Activated CD8-positive, alpha-beta T cell treated with anti-CD3 and anti-CD28 coated beads for 36 hours (primary cell): ENCODE measurements at regions of chr1 and their contacts with region 1.

Region 1: GRCh38 chr1:27556781-27557595 is 47.0 kb downstream of the AHDC1 start:
- DNase-seq: peak; percentile 88
- ATAC-seq: peak; percentile 93
- H3K4me3 Mint-ChIP-seq: no peak overlapping the region
- H3K27ac Mint-ChIP-seq: peak overlapping the region; percentile 72
- H3K4me1 Mint-ChIP-seq: peaks cover 21% of the 10 kb centered on the region
- H3K27me3 Mint-ChIP-seq: no peaks in the 10 kb centered on the region
- CTCF ChIP-seq: peak; percentile 99

Region 2: GRCh38 chr1:27416387-27417111 is 140.4 kb before region 1 on chr1:
- CTCF ChIA-PET with region 1: interaction called, 15 read pairs
- POLR2A ChIA-PET with region 1: no interaction called
- intact Hi-C with region 1: no loop called
- DNase-seq: peak; percentile 71
- ATAC-seq: peak; percentile 49
- H3K4me3 Mint-ChIP-seq: no peak overlapping the region
- H3K27ac Mint-ChIP-seq: peak overlapping the region; percentile 7
- H3K4me1 Mint-ChIP-seq: peaks cover 34% of the 10 kb centered on the region
- H3K27me3 Mint-ChIP-seq: no peaks in the 10 kb centered on the region
- CTCF ChIP-seq: peak; percentile 64

Region 3: DNA sequence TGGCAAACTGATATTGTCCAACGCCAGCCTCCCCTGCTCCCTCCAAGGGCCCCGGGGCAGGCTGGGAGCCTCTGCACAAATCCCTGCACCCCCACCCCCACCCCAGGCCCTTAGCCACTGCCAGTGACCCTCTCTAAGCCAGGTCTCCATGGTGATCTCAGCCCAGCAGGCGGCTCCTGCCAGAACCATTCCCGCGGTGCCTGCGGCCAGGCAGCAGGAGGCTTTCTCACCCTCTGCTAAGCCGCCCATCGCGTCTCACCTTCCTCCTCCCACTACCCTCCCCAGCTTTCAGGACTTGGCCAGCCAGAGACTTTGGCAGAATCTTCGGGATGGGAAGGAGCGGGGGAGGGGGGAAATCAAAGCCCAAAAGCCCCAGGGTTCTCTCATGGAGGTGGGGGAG is 20.2 kb before region 1 on chr1:
- CTCF ChIA-PET with region 1: interaction called, 33 read pairs
- POLR2A ChIA-PET with region 1: no interaction called
- intact Hi-C with region 1: no loop called
- DNase-seq: no peak
- ATAC-seq: no peak
- H3K4me3 Mint-ChIP-seq: no peak overlapping the region
- H3K27ac Mint-ChIP-seq: no peak overlapping the region
- H3K4me1 Mint-ChIP-seq: peaks cover 12% of the 10 kb centered on the region
- H3K27me3 Mint-ChIP-seq: no peaks in the 10 kb centered on the region
- CTCF ChIP-seq: no peak

Region 4: DNA sequence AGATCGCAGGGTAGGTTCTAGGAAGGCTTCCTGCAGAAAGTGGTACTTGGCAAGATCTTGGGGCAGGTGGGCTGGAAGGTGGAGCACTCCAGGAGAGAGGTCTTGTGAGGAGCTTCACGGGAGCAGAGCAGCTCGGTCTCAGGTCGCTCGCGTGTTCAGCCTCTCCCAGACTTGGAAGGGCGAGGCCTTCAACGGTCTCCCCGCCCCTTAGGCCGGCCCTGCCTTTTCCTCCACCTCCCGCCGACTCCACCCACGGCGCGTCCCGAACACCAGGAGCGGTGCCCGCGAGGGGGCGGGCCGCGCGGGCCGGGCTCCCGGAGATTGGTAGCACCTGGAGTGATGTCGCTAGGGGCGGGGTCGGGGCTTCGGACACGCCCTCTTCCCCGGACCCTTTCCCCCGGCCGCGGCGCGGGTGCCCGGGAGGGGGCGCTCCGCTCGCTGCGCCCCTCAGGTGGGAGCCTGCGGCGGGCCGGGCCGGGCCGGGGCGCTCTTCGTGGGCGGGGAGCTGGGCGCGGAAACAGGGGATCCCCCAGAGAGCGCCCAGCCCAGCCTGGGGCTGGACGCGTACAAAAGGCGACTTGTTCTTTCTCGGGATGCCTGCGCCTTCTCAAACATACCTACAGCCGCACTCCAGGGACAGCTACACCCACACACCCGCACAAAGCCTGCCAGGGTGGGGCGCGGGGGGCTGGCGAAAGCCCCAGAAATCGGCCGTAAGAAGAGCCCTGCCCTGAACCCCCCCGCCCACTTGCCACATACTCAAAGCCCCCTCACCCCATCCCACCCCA is 11.5 kb after region 1 on chr1:
- CTCF ChIA-PET with region 1: interaction called, 178 read pairs
- POLR2A ChIA-PET with region 1: interaction called, 12 read pairs
- intact Hi-C with region 1: no loop called
- DNase-seq: peak; percentile 92
- ATAC-seq: peak; percentile 91
- H3K4me3 Mint-ChIP-seq: peak overlapping the region; percentile 44
- H3K27ac Mint-ChIP-seq: peak overlapping the region; percentile 32
- H3K4me1 Mint-ChIP-seq: peaks cover 25% of the 10 kb centered on the region
- H3K27me3 Mint-ChIP-seq: no peaks in the 10 kb centered on the region
- CTCF ChIP-seq: peak; percentile 73

Region 5: DNA sequence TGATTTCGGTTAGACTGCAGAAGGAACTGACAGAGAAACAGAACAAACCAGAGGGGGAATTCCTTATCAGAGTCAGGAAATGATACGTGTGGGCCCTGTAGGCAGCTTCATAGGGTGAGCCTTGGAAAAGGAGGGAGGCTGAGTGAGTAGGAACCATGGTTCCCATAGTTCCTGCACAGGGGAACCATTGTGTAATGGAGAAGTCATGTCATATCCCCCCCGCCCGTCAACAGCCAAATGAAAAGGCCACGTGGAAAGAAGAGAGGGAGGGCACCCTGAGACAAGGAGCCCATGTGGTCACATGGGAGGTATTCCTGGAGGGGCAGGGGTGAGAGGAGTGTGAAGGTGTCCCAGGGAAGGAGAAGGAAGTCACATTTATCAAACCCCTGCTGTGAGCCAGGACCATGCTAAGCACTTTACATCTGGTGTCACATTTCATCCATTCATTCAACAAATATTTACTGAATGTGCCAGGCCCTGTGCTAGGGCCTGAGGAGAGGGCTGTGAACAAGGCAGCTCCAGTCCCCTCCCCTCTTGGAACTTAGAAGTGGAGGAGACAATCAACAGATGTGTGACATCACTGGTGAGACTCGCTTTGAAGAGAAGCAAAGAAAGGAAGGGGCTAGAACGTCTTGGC is 93.7 kb after region 1 on chr1:
- CTCF ChIA-PET with region 1: no interaction called
- POLR2A ChIA-PET with region 1: no interaction called
- intact Hi-C with region 1: no loop called
- DNase-seq: no peak
- ATAC-seq: peak; percentile 45
- H3K4me3 Mint-ChIP-seq: no peak overlapping the region
- H3K27ac Mint-ChIP-seq: peak overlapping the region; percentile 67
- H3K4me1 Mint-ChIP-seq: peaks cover 17% of the 10 kb centered on the region
- H3K27me3 Mint-ChIP-seq: no peaks in the 10 kb centered on the region
- CTCF ChIP-seq: no peak

Region 6: DNA sequence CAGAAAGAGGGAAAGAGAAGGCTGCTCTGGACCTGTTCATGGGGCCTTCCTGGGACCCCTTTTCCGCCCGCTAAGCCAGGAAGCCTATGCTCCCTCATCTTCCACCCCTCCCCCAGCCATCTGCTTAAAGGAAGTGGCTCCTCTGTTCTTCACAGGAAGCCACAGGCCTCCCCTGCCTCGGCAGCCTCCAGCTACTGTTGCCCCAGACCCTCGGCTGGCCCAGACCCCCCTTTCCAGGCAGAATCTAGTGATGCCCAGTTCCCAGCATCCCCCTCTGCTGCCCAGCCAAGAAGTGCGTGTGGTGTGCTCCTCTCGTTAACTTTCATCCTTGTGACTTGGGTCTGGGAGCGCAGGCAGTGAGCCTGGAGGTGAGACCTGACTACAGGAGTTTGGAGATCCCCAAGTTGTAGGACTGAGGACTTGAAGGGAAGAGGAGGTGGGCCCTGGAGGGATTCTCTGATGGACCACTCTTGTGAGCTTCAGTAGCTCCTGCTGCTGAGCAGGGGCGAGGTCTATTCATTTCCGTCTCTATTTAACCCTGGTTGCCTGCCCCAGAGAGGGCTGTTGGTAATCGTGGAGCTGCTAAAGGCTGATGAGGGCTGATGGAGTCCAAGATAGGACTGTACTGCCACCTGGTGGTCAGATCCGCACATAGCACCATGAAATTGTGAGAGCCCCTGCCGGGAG is 105.9 kb after region 1 on chr1:
- CTCF ChIA-PET with region 1: interaction called, 18 read pairs
- POLR2A ChIA-PET with region 1: interaction called, 5 read pairs
- intact Hi-C with region 1: loop called (anchors 2 kb)
- DNase-seq: peak; percentile 96
- ATAC-seq: peak; percentile 80
- H3K4me3 Mint-ChIP-seq: peak overlapping the region; percentile 68
- H3K27ac Mint-ChIP-seq: peak overlapping the region; percentile 98
- H3K4me1 Mint-ChIP-seq: peaks cover 50% of the 10 kb centered on the region
- H3K27me3 Mint-ChIP-seq: no peaks in the 10 kb centered on the region
- CTCF ChIP-seq: peak; percentile 75